Ascending aorta (tissue), 2 donors: ENCODE measurements at regions of chr2 and their contacts with region 1.

Region 1: GRCh38 chr2:20015472-20016083 is 3.1 kb upstream of the MATN3 start:
- DNase-seq: no peak
- H3K4me3 ChIP-seq: no peak overlapping the region
- H3K27ac ChIP-seq: no peak overlapping the region
- H3K4me1 ChIP-seq: peaks cover 3 to 6% of the 10 kb centered on the region in 2 donors
- H3K27me3 ChIP-seq: no peaks in the 10 kb centered on the region
- CTCF ChIP-seq: peak; percentile 49 to 62 (median 62)

Region 2: GRCh38 chr2:19989681-19990415 is 25.7 kb before region 1 on chr2 and contains the start of gene WDR35:
- intact Hi-C with region 1: loop called (anchors 2 kb)
- DNase-seq: peak; percentile 58 to 94
- H3K4me3 ChIP-seq: peak within 1 kb of the TSS; percentile 58 to 67
- H3K27ac ChIP-seq: peak within 1 kb of the TSS; percentile 24 to 35
- H3K4me1 ChIP-seq: peaks cover 0 to 5% of the 10 kb centered on the region in 2 donors
- H3K27me3 ChIP-seq: no peaks in the 10 kb centered on the region
- CTCF ChIP-seq: no peak
- total RNA-seq, gene WDR35: 2.1 TPM

Region 3: DNA sequence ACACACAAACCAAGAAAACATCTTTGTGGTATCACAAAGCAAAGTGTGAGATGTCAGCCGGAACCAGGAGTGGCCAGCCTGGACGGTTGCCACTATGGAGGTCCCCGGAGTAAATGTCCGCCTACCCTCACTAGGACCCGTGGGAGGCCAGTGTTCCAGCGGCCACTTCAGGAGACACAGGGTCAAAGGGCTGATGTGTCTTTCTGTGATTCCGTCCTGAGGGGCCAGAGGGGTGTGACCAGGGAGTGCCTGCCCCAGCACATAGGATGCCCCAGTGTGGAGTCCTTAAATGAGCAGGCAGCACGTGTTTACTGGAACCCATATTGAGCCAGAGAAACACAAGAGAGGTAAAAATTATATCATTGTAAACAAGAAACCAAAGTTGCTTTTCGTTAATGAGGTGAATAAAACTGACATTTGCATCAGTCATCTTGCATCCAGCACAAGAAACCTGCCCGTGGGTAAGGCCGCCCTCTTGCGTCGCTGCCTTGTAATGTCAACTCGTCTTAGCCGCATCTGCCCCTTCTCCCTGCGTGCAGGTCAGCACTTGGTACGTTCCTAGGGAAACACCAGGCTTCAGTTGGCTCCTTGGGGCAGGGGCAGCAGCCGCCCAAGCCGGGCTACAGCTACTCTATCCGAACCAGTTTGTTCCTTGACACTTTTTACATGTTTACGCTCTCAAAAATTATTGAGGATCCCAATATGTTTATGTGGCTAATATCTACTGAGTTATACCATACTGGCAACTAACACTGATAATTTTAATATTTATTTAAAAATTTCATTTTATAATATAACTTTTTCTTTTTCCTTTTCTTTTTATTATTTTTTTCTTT is 82.5 kb after region 1 on chr2:
- intact Hi-C with region 1: loop called (anchors 1 kb)
- DNase-seq: peak in 1 of 2 donors; percentile 90
- H3K4me3 ChIP-seq: no peak overlapping the region
- H3K27ac ChIP-seq: no peak overlapping the region
- H3K4me1 ChIP-seq: no peaks in the 10 kb centered on the region
- H3K27me3 ChIP-seq: no peaks in the 10 kb centered on the region
- CTCF ChIP-seq: peak; percentile 87 to 94 (median 87)